GM10248 (cell line): ENCODE measurements at regions of chr6 and their contacts with region 1.

Region 1: GRCh38 chr6:35219683-35220326 is 6.0 kb downstream of the SCUBE3 start:
- DNase-seq: no peak
- CTCF ChIP-seq: no peak

Region 2: DNA sequence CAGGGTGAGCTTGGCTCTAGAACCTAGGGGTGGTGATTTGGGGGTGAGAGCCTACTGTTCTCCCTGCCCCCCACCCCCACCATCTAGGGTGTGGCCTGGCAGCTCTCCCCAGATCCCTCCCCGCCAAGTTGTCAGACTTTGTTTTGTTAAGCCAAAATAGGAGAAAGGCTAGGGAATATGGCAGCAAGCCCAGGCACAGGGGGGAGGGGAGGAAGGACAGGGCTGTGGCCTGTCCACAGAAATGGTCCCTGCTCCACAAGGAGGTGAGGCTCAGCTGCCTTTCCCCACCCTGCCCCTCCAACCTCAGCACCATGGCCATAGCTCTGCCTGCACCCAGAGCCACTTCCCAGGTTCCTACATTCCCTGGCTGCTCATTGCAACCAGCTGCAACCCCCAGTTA is 11.1 kb after region 1 on chr6:
- CTCF ChIA-PET with region 1: interaction called, 15 read pairs
- POLR2A ChIA-PET with region 1: no interaction called
- DNase-seq: no peak
- CTCF ChIP-seq: no peak

Region 3: GRCh38 chr6:35489995-35490733 is 270.4 kb after region 1 on chr6:
- CTCF ChIA-PET with region 1: no interaction called
- POLR2A ChIA-PET with region 1: no interaction called
- DNase-seq: no peak
- CTCF ChIP-seq: no peak